Caco-2 (cell line): ENCODE measurements at regions of chr10 and their contacts with region 1.

Region 1: GRCh38 chr10:52276982-52277381 is 37.1 kb upstream of the DKK1 start:
- DNase-seq: no peak
- H3K4me3 ChIP-seq: no peak overlapping the region
- H3K4me3 Mint-ChIP-seq: no peak overlapping the region
- H3K27ac Mint-ChIP-seq: no peak overlapping the region
- H3K4me1 ChIP-seq: no peaks in the 10 kb centered on the region
- H3K4me1 Mint-ChIP-seq: no peaks in the 10 kb centered on the region
- H3K27me3 ChIP-seq: no peaks in the 10 kb centered on the region
- H3K27me3 Mint-ChIP-seq: no peaks in the 10 kb centered on the region
- CTCF ChIP-seq: no peak

Region 2: DNA sequence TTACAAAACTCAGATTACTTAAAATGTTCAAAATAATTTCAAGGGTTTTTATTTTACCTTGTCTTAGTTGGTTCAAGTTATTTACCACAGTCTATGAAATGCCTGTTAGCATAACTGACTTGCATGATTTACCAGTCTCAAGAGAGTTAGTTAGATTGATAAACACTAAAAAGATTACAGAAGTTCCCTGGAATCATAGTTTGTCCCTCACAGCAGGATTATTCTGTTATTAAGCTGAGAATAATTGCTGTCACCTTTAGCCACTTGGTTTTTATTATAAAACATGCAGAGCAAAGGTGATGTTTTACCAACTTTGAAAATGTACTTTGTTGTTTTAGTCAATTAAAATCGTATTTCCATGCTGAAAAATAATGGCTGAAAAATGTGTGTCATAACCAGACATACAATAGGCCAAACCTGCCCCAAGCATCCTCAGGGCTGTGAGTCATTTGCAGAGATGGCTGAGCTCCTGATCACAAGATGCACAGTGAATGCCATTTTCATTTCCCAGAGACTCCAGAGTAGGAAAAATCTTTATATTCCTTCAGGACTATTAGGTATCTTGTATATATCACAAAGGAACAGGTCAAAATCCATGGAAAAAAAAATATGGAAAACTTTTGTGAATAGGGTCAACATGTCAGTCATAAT is 50.7 kb before region 1 on chr10:
- CTCF ChIA-PET with region 1: no interaction called
- POLR2A ChIA-PET with region 1: no interaction called
- intact Hi-C with region 1: loop called (anchors 1 kb)
- DNase-seq: no peak
- H3K4me3 ChIP-seq: no peak overlapping the region
- H3K4me3 Mint-ChIP-seq: no peak overlapping the region
- H3K27ac Mint-ChIP-seq: no peak overlapping the region
- H3K4me1 ChIP-seq: no peaks in the 10 kb centered on the region
- H3K4me1 Mint-ChIP-seq: no peaks in the 10 kb centered on the region
- H3K27me3 ChIP-seq: no peaks in the 10 kb centered on the region
- H3K27me3 Mint-ChIP-seq: no peaks in the 10 kb centered on the region
- CTCF ChIP-seq: no peak

Region 3: GRCh38 chr10:52297747-52298146 is 20.8 kb after region 1 on chr10:
- CTCF ChIA-PET with region 1: no interaction called
- POLR2A ChIA-PET with region 1: no interaction called
- intact Hi-C with region 1: no loop called
- DNase-seq: no peak
- H3K4me3 ChIP-seq: no peak overlapping the region
- H3K4me3 Mint-ChIP-seq: no peak overlapping the region
- H3K27ac Mint-ChIP-seq: no peak overlapping the region
- H3K4me1 ChIP-seq: no peaks in the 10 kb centered on the region
- H3K4me1 Mint-ChIP-seq: no peaks in the 10 kb centered on the region
- H3K27me3 ChIP-seq: no peaks in the 10 kb centered on the region
- H3K27me3 Mint-ChIP-seq: no peaks in the 10 kb centered on the region
- CTCF ChIP-seq: no peak